ENCODE measurements at regions of chr20 and their contacts with region 1.

Region 1: GRCh38 chr20:43721429-43722152 is 5.2 kb downstream of the GTSF1L start:
- DNase-seq: peak in 1 of 14 experiments; percentile 8
- ATAC-seq: no peak
- H3K4me3 ChIP-seq: peak overlapping the region; percentile 45
- H3K4me3 Mint-ChIP-seq: peak overlapping the region; percentile 57
- H3K27ac ChIP-seq: peak overlapping the region in 1 of 2 donors; percentile 51
- H3K27ac Mint-ChIP-seq: peak overlapping the region; percentile 80
- H3K4me1 ChIP-seq: peaks cover 35% of the 10 kb centered on the region
- H3K4me1 Mint-ChIP-seq: peaks cover 75% of the 10 kb centered on the region
- H3K27me3 ChIP-seq: no peaks in the 10 kb centered on the region
- H3K27me3 Mint-ChIP-seq: no peaks in the 10 kb centered on the region
- CTCF ChIP-seq: no peak

Region 2: DNA sequence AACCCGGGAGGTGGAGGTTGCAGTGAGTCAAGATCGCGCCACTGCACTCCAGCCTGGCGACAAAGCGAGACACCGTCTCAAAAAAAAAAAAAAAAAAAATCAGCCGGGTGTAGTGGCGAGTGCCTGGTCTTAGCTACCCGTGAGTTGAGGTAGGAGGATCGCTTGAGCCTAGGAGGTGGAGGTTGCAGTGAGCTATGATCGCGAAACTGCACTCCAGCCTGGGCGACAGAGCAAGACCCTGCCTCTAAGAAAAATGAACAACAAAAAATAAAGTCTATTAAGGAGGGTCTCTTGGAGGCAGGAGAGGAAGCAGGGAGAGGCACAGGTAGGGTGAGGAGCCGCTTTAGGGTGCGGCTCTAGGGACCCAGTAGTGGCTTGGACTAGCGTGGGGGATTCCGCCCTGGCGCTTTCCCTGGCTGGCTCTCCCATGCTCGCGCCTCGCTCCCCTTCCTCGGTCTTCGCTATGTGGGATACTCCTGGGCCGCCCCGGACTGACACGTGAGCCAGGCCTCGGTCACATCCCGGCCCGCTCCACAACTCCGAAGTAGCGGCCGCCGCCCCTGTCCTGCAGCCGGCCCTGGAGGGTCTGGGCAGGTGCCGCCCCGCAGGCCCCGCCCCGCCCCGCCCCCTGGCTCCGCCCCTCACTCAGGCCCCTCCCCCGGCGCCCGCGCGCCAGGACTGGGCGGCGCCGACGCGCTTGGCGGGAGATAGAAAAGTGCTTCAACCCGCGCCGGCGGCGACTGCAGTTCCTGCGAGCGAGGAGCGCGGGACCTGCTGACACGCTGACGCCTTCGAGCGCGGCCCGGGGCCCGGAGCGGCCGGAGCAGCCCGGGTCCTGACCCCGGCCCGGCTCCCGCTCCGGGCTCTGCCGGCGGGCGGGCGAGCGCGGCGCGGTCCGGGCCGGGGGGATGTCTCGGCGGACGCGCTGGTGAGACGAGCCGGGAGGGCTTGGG is 54.9 kb before region 1 on chr20 and contains the start of gene MYBL2:
- CTCF ChIA-PET with region 1: no interaction called
- POLR2A ChIA-PET with region 1: interaction called, 4 read pairs
- intact Hi-C with region 1: loop called in 1 of 2 experiments (anchors 5 kb)
- DNase-seq: peak; percentile 50 to 86 (median 64)
- ATAC-seq: peak; percentile 96
- H3K4me3 ChIP-seq: peak within 1 kb of the TSS; percentile 61
- H3K4me3 Mint-ChIP-seq: peak within 1 kb of the TSS; percentile 58
- H3K27ac ChIP-seq: no peak within 1 kb of the TSS
- H3K27ac Mint-ChIP-seq: no peak within 1 kb of the TSS
- H3K4me1 ChIP-seq: peaks cover 15% of the 10 kb centered on the region
- H3K4me1 Mint-ChIP-seq: no peaks in the 10 kb centered on the region
- H3K27me3 ChIP-seq: peaks cover 16 to 24% of the 10 kb centered on the region in 2 experiments
- H3K27me3 Mint-ChIP-seq: peaks cover 27% of the 10 kb centered on the region
- CTCF ChIP-seq: no peak
- total RNA-seq, gene MYBL2: 0.56 to 0.69 TPM

Region 3: GRCh38 chr20:43938932-43939761 is 217.6 kb after region 1 on chr20:
- CTCF ChIA-PET with region 1: no interaction called
- POLR2A ChIA-PET with region 1: no interaction called
- intact Hi-C with region 1: no loop called
- DNase-seq: no peak
- ATAC-seq: no peak
- H3K4me3 ChIP-seq: no peak overlapping the region
- H3K4me3 Mint-ChIP-seq: no peak overlapping the region
- H3K27ac ChIP-seq: no peak overlapping the region
- H3K27ac Mint-ChIP-seq: no peak overlapping the region
- H3K4me1 ChIP-seq: peaks cover 55% of the 10 kb centered on the region
- H3K4me1 Mint-ChIP-seq: peaks cover 64% of the 10 kb centered on the region
- H3K27me3 ChIP-seq: peaks cover 0 to 4% of the 10 kb centered on the region in 2 experiments
- H3K27me3 Mint-ChIP-seq: no peaks in the 10 kb centered on the region
- CTCF ChIP-seq: no peak